GM10248 (cell line): ENCODE measurements at regions of chr7 and their contacts with region 1.

Region 1: DNA sequence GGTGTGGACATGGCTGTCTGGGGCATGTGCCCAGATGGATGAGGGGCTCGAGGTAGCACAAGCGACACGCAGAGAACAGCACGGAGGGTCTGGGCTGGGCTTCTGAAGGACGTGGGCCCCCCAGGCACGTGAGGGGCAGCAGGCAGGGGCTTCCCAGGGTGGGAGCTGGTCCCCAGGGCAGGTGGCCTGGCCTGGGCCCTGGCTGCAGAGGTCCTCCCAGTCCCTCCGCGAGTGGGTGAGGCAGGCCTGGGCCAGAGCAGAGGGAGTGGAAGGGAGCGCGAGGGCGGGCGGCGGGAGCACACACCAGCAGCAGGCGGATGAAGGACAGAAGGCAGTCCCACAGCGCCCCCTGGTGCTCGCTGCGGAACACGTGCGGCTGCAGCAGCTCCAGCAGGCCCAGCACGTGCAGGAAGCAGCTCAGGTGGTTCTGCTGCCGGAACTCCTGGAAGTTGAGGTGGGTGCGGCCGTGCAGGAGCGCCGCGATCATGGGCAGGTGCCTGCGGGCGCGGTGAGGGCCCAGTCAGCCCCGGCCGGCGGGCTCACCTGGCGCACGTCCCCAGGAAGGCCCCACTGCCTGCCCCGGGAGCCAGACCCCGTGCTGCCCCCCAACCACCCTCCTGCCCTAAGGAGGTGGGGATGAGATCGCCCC is 14.7 kb upstream of the MICALL2 start:
- DNase-seq: peak; percentile 92
- CTCF ChIP-seq: peak; percentile 96

Region 2: GRCh38 chr7:1225441-1226185 is 248.4 kb before region 1 on chr7:
- CTCF ChIA-PET with region 1: interaction called, 22 read pairs
- POLR2A ChIA-PET with region 1: no interaction called
- DNase-seq: peak; percentile 75
- CTCF ChIP-seq: peak; percentile 69

Region 3: DNA sequence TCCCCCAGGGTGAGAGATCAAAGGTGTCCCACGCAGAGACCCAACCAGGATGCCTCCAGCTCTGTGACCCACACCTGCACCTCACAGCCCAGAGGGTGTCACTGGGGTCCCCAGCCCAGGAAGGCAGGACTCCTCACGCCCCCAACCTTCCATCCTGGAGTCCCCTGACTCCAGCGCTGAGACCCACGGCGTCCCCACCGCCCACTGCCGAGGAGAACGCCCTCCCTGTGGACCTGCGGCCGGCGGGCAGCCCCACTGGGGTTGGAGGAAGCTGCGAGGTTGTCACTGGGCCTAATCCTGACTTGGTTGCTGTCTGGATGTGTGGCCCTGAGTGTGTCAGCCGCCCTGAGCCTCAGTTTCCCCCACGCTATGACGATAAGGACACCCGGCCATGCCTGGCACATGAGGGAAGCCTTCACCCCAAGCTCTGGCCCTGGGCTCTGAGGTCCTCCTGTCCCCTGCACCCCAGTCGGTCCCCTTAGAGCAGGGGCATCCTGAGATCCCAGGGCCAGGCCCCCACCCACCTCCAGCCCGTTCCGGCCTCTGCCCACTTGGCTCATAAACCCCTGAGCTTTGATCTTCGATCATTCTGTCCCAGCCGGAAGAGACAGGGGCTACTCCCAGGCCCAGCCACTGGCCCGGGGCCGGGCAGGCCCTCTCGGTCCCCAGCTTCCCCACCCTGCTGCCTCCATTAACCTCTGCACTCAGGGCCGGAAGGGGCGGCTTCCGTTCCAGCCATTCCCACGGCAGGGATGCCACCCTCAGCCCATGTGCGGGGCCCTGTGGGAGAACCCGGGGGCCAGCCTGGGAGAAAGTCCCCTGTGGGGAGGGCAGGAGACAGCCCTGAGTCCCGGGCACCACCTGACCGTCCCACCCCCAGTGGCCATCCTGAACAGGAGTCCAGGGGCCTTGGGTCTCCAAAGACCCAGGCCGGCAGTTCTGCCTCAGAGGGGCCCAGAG is 127.9 kb before region 1 on chr7:
- CTCF ChIA-PET with region 1: no interaction called
- POLR2A ChIA-PET with region 1: no interaction called
- DNase-seq: no peak
- CTCF ChIP-seq: no peak

Region 4: DNA sequence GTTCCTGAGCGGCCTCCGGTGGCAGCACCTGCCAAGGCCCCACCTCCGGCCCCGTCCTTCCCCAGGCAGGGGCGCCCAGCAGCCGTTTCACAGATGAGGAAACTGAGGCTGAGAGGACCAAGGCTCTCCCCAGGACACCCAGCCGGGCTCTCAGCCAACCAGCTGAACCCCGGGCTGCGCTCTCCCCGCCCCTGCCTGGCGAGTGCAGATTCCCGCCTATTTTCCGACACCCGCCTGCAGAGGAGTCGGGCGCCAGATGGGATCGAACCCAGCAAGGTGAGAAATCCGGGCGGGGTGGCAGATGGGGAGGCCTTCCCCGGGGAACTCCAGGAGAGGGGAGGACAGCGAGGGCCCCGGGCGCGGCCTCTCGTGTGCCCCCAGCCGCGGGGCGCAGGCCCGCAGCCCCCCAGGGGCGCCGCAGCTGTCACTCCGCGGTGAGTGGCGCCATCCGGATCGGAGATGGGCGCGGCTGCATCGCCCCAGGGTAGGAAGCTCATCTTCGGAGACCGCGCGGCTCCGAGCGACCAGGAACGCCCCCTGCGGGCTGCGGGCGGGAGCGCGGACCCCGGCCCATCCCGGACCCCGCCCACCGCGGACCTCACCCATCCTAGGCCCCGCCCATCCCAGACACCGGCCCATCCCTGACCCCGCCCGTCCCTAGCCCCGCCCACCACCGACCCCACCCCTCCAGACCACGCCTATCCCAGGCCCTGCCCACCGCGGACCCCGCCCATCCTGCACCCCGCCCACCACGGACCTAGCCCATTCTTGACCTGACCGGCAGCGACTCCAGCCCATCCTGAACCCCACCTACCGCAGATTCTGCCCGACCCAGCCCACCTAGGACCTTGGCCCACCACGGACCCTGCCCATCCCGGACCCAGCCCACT is 105.1 kb before region 1 on chr7:
- CTCF ChIA-PET with region 1: no interaction called
- POLR2A ChIA-PET with region 1: no interaction called
- DNase-seq: peak; percentile 62
- CTCF ChIP-seq: no peak

Region 5: GRCh38 chr7:1418505-1419309 is 55.3 kb before region 1 on chr7:
- CTCF ChIA-PET with region 1: interaction called, 10 read pairs
- POLR2A ChIA-PET with region 1: no interaction called
- DNase-seq: no peak
- CTCF ChIP-seq: no peak

Region 6: DNA sequence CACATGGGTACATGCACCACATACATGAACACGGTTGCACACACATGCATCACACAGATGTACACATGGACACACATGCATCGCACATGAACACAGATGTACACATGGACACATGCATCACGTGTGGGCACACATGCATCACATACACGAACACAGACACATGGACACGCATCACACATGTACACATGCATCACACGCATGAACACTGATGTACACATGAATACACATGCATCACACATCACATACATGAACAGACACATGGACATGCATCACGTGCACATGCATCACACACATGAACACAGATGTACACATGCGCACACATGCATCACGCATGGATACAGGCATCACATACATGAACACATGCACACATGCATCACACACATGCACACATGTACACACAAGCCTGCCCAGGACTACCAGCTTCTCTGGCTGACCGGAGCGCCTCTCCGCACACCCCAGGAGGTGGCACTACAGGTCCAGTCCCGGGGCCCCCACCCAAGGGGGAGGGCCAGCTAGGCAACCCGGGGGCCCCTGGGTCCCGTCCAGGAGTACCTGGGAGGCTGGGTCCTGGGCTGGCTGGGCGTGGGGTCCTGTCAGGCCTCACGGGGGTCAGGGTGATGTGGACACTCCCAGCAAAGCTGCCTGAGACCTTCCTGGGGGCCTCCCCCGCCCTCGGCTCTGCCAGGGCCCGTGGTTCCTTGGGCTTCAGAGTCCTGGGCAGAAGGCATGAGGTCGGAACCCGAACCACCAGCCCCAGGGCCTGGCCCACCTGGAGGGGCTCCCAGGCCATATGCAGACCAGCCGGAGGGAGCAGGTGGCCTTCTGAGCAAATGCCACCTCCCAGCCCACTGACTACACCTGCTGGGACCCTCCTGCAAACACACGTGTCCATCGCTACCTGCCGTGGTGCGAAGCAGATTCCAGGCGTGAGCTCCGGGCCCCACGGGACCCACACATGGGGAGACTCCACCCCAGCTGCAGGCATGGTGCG is 34.3 kb before region 1 on chr7:
- CTCF ChIA-PET with region 1: interaction called, 26 read pairs
- POLR2A ChIA-PET with region 1: no interaction called
- DNase-seq: no peak
- CTCF ChIP-seq: peak; percentile 23

Region 7: GRCh38 chr7:1459522-1459892 is 14.5 kb before region 1 on chr7:
- CTCF ChIA-PET with region 1: interaction called, 40 read pairs
- POLR2A ChIA-PET with region 1: no interaction called
- DNase-seq: peak; percentile 100
- CTCF ChIP-seq: no peak